Astrocyte of the cerebellum (primary cell): ENCODE measurements at regions of chr16 and their contacts with region 1.

Region 1: GRCh38 chr16:2415085-2415484 is 14.2 kb upstream of the CCNF start:
- DNase-seq: no peak
- H3K4me3 ChIP-seq: no peak overlapping the region
- CTCF ChIP-seq: no peak

Region 2: GRCh38 chr16:2371421-2371820 is 43.7 kb before region 1 on chr16:
- in situ Hi-C with region 1: loop called (anchors 5 kb)
- DNase-seq: no peak
- H3K4me3 ChIP-seq: no peak overlapping the region
- CTCF ChIP-seq: no peak